ENCODE measurements at regions of chr1 and their contacts with region 1.

Region 1: GRCh38 chr1:230948301-230948700 is 30.4 kb downstream of the TTC13 start:
- DNase-seq: no peak
- H3K4me3 ChIP-seq: no peak overlapping the region
- H3K27ac ChIP-seq: no peak overlapping the region
- H3K4me1 ChIP-seq: no peaks in the 10 kb centered on the region
- H3K27me3 ChIP-seq: no peaks in the 10 kb centered on the region
- CTCF ChIP-seq: no peak
- EP300 ChIP-seq: no peak
- POLR2A ChIP-seq: no peak

Region 2: DNA sequence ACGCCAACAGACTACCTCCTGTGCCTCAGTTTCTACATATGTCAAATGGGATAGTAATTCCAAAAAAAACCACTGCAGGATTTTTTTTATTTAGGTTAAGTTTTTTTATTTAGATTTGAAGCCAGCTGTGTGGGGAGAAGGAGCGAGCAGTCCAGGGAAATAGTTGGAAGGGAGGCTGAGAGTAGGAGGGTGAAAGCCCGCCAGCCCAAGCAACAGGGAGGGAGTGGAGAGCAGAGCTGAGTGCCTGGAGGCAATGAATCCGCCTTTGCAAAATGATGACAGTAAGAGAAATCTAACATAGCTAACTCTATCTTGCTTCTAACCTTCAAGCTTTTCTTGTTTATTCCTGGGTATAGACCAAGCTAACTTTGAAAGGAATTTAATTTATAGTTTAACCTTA is 64.3 kb before region 1 on chr1:
- intact Hi-C with region 1: loop called in 1 of 4 experiments (anchors 2 kb)
- DNase-seq: no peak
- H3K4me3 ChIP-seq: no peak overlapping the region
- H3K27ac ChIP-seq: no peak overlapping the region
- H3K4me1 ChIP-seq: peaks cover 2% of the 10 kb centered on the region
- H3K27me3 ChIP-seq: no peaks in the 10 kb centered on the region
- CTCF ChIP-seq: no peak
- EP300 ChIP-seq: no peak
- POLR2A ChIP-seq: no peak